ENCODE measurements at regions of chr11 and their contacts with region 1.

Region 1: DNA sequence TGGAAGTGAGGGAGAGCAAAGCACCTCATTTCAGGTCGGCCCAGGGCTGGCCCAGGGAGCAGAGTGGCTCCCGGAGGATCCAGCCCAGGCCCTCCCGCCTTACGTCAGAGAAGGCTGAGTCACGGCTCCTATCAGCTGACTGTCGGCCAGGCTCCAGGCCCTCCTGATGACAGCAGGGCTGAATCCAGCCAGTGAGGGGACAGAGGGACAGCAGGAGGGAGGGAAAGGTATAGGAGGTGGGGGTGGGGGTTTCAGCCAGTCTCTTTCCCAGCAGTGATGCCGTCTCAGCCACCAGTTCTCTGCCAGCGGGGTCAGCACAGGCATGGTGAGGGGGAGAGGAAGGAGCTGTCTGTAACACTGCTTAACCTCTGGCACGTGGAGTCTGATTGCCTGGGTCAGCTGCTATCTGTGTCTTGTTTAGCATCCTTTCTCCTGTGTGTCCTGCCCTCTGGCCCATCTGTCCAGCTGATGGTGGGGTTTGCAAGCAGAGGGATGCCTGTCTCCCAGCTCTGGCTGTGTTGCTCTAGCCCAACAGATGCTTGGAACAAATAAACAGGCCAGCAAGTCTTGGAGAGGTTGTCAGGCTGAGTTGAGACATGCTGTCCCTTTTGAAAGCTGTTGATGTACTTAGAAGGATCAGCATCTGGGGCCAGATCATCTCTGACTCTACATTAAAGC is 74.0 kb downstream of the ADAMTS15 start:
- DNase-seq: peak; percentile 91 to 97 (median 93)
- ATAC-seq: peak; percentile 94 to 98 (median 96)
- H3K4me3 ChIP-seq: no peak overlapping the region
- H3K27ac ChIP-seq: peak overlapping the region; percentile 76 to 95 (median 84)
- H3K4me1 ChIP-seq: peaks cover 0 to 51% (median 32%) of the 10 kb centered on the region in 12 donors
- H3K27me3 ChIP-seq: no peaks in the 10 kb centered on the region
- CTCF ChIP-seq: no peak
- POLR2A ChIP-seq: peak in 1 of 2 donors; percentile 64

Region 2: DNA sequence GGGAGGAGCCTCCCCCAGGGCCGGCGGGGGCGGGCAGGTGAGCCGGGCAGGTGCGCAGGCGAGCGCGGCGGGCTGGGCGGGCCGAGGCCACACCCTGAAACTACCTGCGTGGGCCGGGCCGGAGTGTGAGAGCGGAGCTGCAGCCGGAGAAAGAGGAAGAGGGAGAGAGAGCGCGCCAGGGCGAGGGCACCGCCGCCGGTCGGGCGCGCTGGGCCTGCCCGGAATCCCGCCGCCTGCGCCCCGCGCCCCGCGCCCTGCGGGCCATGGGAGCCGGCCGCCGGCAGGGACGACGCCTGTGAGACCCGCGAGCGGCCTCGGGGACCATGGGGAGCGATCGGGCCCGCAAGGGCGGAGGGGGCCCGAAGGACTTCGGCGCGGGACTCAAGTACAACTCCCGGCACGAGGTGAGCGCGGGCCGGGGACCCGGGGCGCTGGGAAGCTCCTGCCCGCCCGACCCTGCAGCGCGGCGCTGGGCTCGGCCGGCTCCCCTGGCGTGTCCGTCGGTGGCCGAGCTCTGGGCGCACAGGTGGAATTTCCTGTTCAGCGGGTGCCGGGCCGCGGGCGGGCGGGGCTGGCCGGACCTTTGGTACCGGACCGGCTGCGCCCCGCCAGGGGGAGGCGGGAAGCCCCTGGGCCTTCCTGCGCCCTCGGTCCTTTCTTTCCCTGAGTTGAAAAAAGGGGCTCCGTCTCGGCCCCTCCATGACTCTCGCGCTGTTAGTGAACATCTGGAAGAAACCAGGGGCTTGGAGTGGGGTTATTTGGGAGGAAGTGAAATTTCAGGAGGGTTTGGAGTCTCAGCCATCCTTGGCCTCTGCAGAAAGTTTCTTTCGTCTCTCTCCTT is 362.5 kb before region 1 on chr11 and contains the start of gene ST14:
- intact Hi-C with region 1: no loop called
- DNase-seq: peak in 1 of 5 donors; percentile 22
- ATAC-seq: peak in 2 of 4 donors; percentile 38 to 45
- H3K4me3 ChIP-seq: peak within 1 kb of the TSS; percentile 17 to 59 (median 34)
- H3K27ac ChIP-seq: no peak within 1 kb of the TSS
- H3K4me1 ChIP-seq: peaks cover 0 to 59% (median 12%) of the 10 kb centered on the region in 12 donors
- H3K27me3 ChIP-seq: peaks cover 0 to 34% (median 24%) of the 10 kb centered on the region in 9 donors
- CTCF ChIP-seq: no peak
- POLR2A ChIP-seq: no peak
- total RNA-seq, gene ST14: 0.37 to 13.0 (median 1.3) TPM

Region 3: GRCh38 chr11:130454491-130455252 is 67.8 kb before region 1 on chr11:
- intact Hi-C with region 1: loop called in 8 of 10 experiments (anchors 2 to 5 kb)
- DNase-seq: peak in 2 of 5 donors; percentile 20 to 39
- ATAC-seq: peak in 3 of 4 donors; percentile 15 to 38 (median 30)
- H3K4me3 ChIP-seq: peak overlapping the region in 1 of 12 donors; percentile 1
- H3K27ac ChIP-seq: peak overlapping the region in 11 of 12 donors; percentile 65 to 91 (median 81)
- H3K4me1 ChIP-seq: peaks cover 0 to 90% (median 67%) of the 10 kb centered on the region in 12 donors
- H3K27me3 ChIP-seq: peaks cover 0 to 6% (median 0%) of the 10 kb centered on the region in 9 donors
- CTCF ChIP-seq: no peak
- POLR2A ChIP-seq: no peak

Region 4: DNA sequence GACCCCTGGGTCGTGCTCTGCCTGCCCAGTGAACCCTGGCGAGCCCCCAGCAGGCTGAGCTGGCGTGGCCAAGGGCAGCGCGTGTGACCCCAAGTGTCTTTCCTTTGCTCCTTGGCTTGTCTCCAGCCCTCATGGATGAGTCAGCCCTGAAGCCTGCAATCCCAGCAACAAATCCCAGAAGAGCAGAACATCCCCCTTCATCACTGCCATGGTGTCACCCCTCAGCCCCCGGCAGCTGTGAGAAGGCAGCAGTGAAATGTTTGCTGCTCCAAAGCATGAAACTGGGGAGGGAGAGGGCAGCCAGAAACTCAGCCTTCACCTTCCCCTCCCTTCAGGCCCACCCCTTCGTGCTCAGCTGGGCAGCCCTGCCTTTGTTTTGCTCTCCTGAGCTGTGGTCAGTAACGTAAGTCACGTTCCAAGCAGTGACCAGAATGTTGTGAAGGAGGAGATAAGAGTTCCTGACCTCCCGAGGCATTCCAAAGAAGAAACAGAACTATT is 44.2 kb before region 1 on chr11:
- intact Hi-C with region 1: loop called in 4 of 10 experiments (anchors 1 to 5 kb)
- DNase-seq: peak; percentile 78 to 92 (median 86)
- ATAC-seq: peak; percentile 54 to 82 (median 75)
- H3K4me3 ChIP-seq: no peak overlapping the region
- H3K27ac ChIP-seq: peak overlapping the region; percentile 73 to 88 (median 84)
- H3K4me1 ChIP-seq: peaks cover 11 to 57% (median 47%) of the 10 kb centered on the region in 12 donors
- H3K27me3 ChIP-seq: no peaks in the 10 kb centered on the region
- CTCF ChIP-seq: no peak
- POLR2A ChIP-seq: no peak

Region 5: DNA sequence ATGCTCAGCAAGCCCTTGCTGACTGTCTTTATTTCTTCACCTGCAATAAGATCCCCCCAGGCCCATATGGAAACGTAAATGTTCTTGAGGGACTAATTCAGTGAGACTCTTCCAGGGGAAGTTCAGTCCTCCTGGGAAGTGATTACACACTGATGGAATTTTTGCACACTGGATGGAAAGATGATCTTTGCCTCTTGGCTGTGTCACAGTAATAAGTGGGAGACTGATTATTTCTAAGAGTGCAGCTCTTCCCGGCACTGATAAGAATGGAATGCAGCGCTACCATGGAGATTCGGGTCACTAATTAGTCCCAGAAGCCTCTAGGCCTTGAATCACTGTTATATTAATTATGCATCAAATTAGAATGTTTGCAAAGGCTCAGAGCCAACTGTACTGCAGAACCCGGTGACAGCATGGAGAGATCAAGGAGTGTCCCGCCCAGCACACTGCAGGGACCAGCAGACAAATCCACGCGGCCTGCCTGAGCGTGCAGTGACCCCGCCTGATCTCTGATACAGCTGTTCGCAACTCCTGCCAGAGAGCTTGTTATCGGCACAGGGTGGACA is 215.5 kb after region 1 on chr11:
- intact Hi-C with region 1: loop called in 1 of 10 experiments (anchors 10 kb)
- DNase-seq: peak; percentile 79 to 89 (median 84)
- ATAC-seq: peak; percentile 93 to 98 (median 96)
- H3K4me3 ChIP-seq: peak overlapping the region in 3 of 12 donors; percentile 1 to 12 (median 5)
- H3K27ac ChIP-seq: peak overlapping the region in 10 of 12 donors; percentile 7 to 74 (median 54)
- H3K4me1 ChIP-seq: peaks cover 3 to 24% (median 18%) of the 10 kb centered on the region in 12 donors
- H3K27me3 ChIP-seq: no peaks in the 10 kb centered on the region
- CTCF ChIP-seq: no peak
- POLR2A ChIP-seq: no peak

Measured in heart left ventricle (tissue), 16 donors.